SK-MEL-5 (cell line): ENCODE measurements at regions of chr2 and their contacts with region 1.

Region 1: DNA sequence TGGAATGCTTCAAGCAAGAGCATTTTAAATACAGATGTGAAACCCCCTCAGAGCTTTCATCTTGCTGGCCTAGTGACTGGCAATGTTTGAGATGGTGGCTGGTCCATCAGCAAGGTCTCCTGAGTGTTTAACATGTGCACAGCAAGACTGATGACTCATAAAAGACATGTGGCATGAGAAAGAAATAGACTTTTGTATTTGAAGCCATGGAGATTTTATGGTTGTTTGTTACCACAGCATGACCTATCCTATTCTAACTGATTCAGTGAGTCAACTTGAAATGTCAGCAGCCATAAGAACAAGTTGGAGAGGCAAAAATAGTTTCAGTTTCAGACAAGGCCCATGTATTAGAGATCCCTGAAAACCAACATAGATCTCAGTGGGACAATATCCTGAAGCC is 154.7 kb upstream of the LYPD1 start:
- DNase-seq: peak; percentile 92

Region 2: DNA sequence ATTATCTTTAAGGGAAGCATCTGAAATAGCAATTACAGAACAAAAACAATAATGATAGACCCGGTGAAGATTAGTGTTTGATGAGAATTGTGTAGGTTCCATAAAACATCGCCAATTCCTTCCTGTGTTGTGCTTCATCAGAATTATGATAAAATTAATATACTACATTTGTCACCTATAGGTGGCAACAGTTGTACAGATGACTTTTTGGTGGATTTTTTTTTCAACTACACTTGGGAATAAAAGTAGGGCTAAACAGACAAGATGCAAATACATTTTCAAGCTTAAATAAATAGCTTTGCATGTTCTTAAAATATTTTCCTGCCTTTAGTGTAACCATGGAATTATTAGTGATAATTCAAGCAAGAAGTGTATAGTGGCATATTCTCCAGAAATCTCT is 147.7 kb before region 1 on chr2:
- in situ Hi-C with region 1: loop called (anchors 25 kb)
- DNase-seq: peak; percentile 32

Region 3: GRCh38 chr2:132733094-132733493 is 91.6 kb before region 1 on chr2:
- in situ Hi-C with region 1: no loop called
- DNase-seq: no peak